HAP-1 (cell line): ENCODE measurements at regions of chr16 and their contacts with region 1.

Region 1: GRCh38 chr16:14249291-14250032 is 178.3 kb downstream of the MRTFB start:
- DNase-seq: peak; percentile 57 to 58
- H3K4me3 ChIP-seq: no peak overlapping the region
- H3K4me1 ChIP-seq: no peaks in the 10 kb centered on the region
- H3K27me3 ChIP-seq: no peaks in the 10 kb centered on the region

Region 2: DNA sequence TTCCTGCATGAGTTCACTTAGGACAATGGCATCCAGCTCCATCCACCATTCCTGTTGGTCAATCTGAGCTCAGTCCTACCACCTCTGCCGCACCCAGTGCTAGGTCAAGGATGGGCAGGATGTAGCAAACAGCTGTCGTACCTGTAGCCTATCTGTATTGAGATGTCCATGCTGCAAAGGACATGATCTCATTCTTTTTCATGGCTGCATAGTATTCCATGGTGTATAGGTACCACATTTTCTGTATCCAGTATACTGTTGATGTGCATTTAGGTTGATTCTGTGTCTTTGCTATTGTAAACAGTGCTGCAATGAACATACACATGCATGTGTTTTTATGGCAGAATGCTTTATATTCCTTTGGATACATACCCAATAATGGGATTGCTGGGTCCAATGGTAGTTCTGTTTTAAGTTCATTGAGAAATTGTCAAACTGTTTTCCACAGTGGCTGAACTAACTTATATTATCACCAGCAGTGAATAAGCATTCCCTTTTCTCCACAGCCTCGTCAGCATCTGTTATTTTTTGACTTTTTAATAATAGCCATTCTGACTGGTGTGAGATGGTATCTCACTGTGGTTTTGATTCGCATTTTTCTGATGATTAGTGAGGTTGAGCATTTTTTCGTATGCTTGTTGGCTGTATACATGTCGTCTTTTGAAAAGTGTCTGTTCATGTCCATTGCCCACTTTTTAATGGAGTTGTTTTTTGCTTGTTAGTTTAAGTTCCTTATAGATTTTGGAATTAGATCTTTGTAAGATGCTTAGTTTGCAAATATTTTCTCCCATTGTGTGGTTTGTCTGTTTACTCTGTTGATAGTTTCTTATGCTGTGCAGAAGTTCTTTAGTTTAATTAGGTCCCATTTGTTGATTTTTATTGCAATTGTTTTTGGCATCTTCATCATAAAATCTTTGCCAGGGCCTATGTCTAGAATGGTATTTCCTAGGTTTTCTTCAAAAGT is 185.6 kb before region 1 on chr16:
- in situ Hi-C with region 1: no loop called
- DNase-seq: no peak
- H3K4me3 ChIP-seq: no peak overlapping the region
- H3K4me1 ChIP-seq: no peaks in the 10 kb centered on the region
- H3K27me3 ChIP-seq: no peaks in the 10 kb centered on the region

Region 3: DNA sequence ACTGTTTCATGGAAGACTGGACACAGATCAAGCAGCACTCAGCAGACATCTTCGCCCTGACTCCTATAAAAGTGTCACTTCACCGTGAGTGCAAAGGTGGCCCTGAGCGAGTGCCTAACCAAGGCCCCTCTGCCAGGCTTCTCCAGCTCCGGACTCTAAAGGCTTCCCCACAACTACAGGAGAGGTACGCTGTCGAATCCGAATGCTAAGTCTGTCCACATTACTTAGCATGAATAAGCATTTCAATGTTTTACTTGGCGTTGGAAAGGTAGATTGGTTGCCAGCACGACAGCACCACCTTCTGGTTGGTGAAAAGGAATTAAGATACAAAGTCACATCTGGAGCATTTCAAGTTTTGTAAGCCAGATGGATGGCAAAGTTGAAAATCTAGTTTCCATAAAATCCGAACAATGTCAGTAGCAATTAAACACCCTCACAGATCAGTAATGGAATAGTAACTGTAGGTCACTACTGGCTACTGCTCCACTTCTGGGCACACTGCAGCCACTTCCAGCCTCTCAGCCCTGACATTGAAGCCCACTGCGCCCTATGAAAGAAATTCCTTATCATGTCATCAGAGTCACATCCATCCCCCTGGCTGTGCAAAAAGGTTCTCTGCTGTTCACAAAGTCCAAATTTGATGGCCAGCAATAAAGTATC is 279.7 kb after region 1 on chr16:
- in situ Hi-C with region 1: loop called (anchors 10 kb)
- DNase-seq: peak; percentile 78 to 84
- H3K4me3 ChIP-seq: no peak overlapping the region
- H3K4me1 ChIP-seq: peaks cover 16% of the 10 kb centered on the region
- H3K27me3 ChIP-seq: no peaks in the 10 kb centered on the region